Activated CD8-positive, alpha-beta T cell treated with anti-CD3 and anti-CD28 coated beads, Interleukin-2, amount 10 ng/mL, durations not matched to agents 7 days and 5 days (primary cell): ENCODE measurements at regions of chr6 and their contacts with region 1.

Region 1: DNA sequence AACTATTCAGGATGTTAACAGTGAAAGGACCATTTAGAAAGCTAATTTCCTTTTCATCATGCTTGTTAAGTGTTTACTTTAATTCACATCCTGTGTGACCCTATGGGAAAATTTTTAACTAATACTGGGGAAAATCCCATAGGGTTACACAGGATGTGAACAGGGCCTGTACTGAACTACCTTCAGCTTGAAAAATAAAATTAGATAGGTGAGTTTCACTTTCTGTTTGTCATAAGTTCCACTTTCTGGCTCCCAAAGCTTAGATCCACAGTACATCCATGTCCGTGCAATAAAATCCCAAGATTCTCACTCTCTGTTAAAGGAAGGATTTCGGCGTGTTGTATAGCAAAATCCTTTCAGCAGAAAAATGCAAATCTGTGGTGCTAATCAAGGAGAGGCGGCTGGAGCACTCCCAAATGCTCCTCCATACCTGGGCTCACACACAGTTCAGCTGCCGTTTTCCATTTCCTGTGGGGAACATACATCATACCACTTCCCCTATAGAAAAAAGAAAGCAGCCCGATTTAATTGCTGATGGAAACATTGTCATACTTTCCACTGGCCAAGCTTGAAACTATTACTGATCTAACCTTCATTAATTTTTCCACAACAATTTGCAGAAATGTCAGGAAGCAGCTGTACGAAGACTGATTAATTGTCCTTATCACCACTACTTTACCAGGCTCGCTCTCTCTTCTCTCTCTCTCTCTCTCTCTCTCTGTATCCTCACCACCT is 125.2 kb downstream of the HIVEP2 start:
- DNase-seq: peak; percentile 66
- ATAC-seq: peak; percentile 77
- H3K4me3 Mint-ChIP-seq: peak overlapping the region; percentile 85
- H3K27ac Mint-ChIP-seq: peak overlapping the region; percentile 97
- H3K4me1 Mint-ChIP-seq: peaks cover 56% of the 10 kb centered on the region
- H3K27me3 Mint-ChIP-seq: no peaks in the 10 kb centered on the region

Region 2: GRCh38 chr6:142838821-142839685 is 19.3 kb after region 1 on chr6:
- CTCF ChIA-PET with region 1: interaction called, 31 read pairs
- POLR2A ChIA-PET with region 1: interaction called, 19 read pairs
- DNase-seq: no peak
- ATAC-seq: no peak
- H3K4me3 Mint-ChIP-seq: peak overlapping the region; percentile 6
- H3K27ac Mint-ChIP-seq: peak overlapping the region; percentile 12
- H3K4me1 Mint-ChIP-seq: peaks cover 58% of the 10 kb centered on the region
- H3K27me3 Mint-ChIP-seq: no peaks in the 10 kb centered on the region